B cell (primary cell): ENCODE measurements at regions of chr15 and their contacts with region 1.

Region 1: GRCh38 chr15:69394556-69395282 is 19.4 kb upstream of the KIF23 start:
- DNase-seq: peak; percentile 86
- ATAC-seq: peak; percentile 98
- H3K4me3 ChIP-seq: no peak overlapping the region
- H3K4me3 Mint-ChIP-seq: peak overlapping the region; percentile 13
- H3K27ac ChIP-seq: no peak overlapping the region
- H3K27ac Mint-ChIP-seq: no peak overlapping the region
- H3K4me1 ChIP-seq: peaks cover 3 to 7% of the 10 kb centered on the region in 2 donors
- H3K4me1 Mint-ChIP-seq: peaks cover 6% of the 10 kb centered on the region
- H3K27me3 ChIP-seq: peaks cover 0 to 3% (median 0%) of the 10 kb centered on the region in 4 experiments
- H3K27me3 Mint-ChIP-seq: peaks cover 3% of the 10 kb centered on the region
- CTCF ChIP-seq: peak; percentile 93

Region 2: DNA sequence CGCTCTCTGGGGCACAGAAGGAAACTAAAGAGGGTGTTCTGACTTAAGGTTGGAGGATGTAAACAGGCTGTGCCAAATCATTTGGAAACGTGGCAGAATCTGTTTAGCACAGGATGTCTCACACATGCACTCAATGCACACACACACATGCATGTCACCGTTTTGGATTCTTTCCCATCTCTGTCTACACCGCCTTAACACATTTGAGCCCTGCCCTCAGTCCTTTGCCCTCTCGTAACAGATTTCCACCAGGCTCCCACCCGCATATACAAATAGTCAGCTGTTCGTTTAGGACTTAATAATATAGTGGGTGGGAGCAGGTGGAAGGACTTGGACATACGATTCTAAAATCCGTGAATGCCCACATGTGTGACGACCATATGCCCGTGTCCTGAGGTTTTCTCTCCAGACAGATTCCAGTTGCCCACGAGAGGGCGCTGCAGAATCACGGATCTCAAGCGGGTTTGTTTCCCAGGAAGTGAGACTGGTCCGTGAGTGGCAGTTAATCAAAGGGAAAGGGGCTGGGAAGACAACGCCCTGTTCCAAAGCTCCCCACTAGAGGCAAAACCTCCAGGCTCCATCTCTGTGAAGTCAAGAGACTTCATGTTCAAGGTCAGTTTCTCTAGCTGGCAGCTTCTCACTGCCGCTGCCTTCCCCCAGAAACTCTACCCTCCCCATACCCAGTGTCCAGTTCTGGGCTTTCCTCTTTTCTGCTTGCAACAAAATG is 335.7 kb before region 1 on chr15:
- CTCF ChIA-PET with region 1: interaction called, 18 read pairs
- POLR2A ChIA-PET with region 1: no interaction called
- intact Hi-C with region 1: no loop called
- DNase-seq: peak; percentile 70
- ATAC-seq: no peak
- H3K4me3 ChIP-seq: no peak overlapping the region
- H3K4me3 Mint-ChIP-seq: no peak overlapping the region
- H3K27ac ChIP-seq: no peak overlapping the region
- H3K27ac Mint-ChIP-seq: no peak overlapping the region
- H3K4me1 ChIP-seq: peaks cover 4 to 12% of the 10 kb centered on the region in 2 donors
- H3K4me1 Mint-ChIP-seq: peaks cover 17% of the 10 kb centered on the region
- H3K27me3 ChIP-seq: peaks cover 0 to 12% (median 0%) of the 10 kb centered on the region in 4 experiments
- H3K27me3 Mint-ChIP-seq: peaks cover 28% of the 10 kb centered on the region
- CTCF ChIP-seq: peak; percentile 79